ENCODE measurements at regions of chr2 and their contacts with region 1.

Region 1: DNA sequence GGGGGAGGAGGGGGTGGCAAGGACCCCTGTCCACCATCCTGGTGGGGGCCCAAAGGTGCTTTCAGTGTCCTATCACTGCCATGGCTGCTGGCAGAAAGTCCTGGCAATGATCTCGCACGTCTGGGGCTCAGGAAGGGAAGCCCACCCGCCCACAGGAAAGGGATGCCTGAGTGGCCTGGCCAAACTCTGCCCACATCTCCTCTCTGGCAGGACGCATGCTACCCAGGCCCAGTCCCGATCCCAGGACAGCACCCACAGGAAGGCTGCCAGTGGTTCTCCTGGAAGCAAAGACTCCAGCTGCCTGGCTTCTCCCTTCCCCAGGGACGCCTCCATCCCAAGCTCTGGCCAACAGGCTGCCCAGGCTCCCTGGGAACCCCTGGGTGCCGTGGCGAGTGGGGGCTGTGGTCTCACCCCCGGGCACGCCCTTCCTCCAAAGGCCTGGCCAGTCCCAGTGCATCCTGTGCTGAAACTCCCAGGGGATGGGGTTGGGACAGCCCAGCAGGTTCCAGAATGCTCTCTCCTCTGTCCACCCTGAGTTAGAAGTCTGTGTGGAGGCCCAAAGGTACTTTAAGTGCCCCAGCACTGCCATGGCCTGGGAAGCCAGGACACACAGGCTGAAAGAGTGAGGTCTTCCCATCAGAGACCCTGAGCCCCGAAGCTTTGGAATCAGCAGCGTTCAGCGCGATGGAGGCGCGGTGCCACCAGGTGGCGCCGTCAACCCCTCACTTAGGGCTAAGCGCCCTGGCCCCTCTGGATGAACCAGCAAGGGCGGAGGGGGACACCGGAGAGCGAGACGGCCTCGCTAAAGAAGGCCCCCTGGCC is 29.8 kb upstream of the TAF1B start:
- DNase-seq: peak; percentile 43 to 64 (median 58)
- H3K4me3 ChIP-seq: no peak overlapping the region
- H3K4me3 Mint-ChIP-seq: no peak overlapping the region
- H3K27ac ChIP-seq: no peak overlapping the region
- H3K27ac Mint-ChIP-seq: peak overlapping the region in 1 of 7 donors; percentile 77
- H3K4me1 ChIP-seq: peaks cover 6% of the 10 kb centered on the region
- H3K4me1 Mint-ChIP-seq: peaks cover 9 to 16% (median 12%) of the 10 kb centered on the region in 4 donors
- H3K27me3 ChIP-seq: no peaks in the 10 kb centered on the region
- H3K27me3 Mint-ChIP-seq: peaks cover 2 to 5% of the 10 kb centered on the region in 2 donors

Region 2: GRCh38 chr2:9799665-9800632 is 13.6 kb before region 1 on chr2:
- CTCF ChIA-PET with region 1: interaction called, 91 read pairs
- POLR2A ChIA-PET with region 1: interaction called, 5 read pairs
- intact Hi-C with region 1: no loop called
- DNase-seq: peak; percentile 76 to 84 (median 79)
- H3K4me3 ChIP-seq: peak overlapping the region in 1 of 2 donors; percentile 21
- H3K4me3 Mint-ChIP-seq: peak overlapping the region; percentile 71 to 96 (median 89)
- H3K27ac ChIP-seq: peak overlapping the region; percentile 75
- H3K27ac Mint-ChIP-seq: peak overlapping the region; percentile 92 to 98 (median 93)
- H3K4me1 ChIP-seq: peaks cover 36% of the 10 kb centered on the region
- H3K4me1 Mint-ChIP-seq: peaks cover 21 to 48% (median 33%) of the 10 kb centered on the region in 4 donors
- H3K27me3 ChIP-seq: no peaks in the 10 kb centered on the region
- H3K27me3 Mint-ChIP-seq: no peaks in the 10 kb centered on the region

Region 3: DNA sequence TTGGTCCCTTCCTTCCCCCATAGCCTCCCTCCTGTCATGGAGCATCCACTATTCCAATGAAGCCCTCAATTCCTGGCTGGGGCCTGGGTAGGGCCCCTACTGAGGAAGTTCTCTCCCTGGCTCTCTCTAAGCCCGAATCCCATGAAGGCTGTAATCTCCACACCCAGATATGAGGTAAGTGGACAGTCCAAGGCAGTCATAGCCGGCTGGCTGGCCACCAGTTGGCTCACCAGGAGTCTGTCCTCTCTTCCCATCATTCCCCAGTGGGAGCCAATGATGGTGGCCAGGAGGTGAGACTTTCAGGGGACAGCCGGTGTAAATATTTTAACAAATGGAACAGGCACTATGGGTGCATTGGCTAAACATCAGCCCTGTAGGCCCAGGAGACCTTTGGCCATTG is 23.0 kb after region 1 on chr2:
- CTCF ChIA-PET with region 1: interaction called, 12 read pairs
- POLR2A ChIA-PET with region 1: no interaction called
- intact Hi-C with region 1: no loop called
- DNase-seq: no peak
- H3K4me3 ChIP-seq: no peak overlapping the region
- H3K4me3 Mint-ChIP-seq: no peak overlapping the region
- H3K27ac ChIP-seq: no peak overlapping the region
- H3K27ac Mint-ChIP-seq: peak overlapping the region in 1 of 7 donors; percentile 3
- H3K4me1 ChIP-seq: no peaks in the 10 kb centered on the region
- H3K4me1 Mint-ChIP-seq: peaks cover 0 to 2% (median 0%) of the 10 kb centered on the region in 4 donors
- H3K27me3 ChIP-seq: no peaks in the 10 kb centered on the region
- H3K27me3 Mint-ChIP-seq: peaks cover 0 to 2% of the 10 kb centered on the region in 2 donors

Region 4: DNA sequence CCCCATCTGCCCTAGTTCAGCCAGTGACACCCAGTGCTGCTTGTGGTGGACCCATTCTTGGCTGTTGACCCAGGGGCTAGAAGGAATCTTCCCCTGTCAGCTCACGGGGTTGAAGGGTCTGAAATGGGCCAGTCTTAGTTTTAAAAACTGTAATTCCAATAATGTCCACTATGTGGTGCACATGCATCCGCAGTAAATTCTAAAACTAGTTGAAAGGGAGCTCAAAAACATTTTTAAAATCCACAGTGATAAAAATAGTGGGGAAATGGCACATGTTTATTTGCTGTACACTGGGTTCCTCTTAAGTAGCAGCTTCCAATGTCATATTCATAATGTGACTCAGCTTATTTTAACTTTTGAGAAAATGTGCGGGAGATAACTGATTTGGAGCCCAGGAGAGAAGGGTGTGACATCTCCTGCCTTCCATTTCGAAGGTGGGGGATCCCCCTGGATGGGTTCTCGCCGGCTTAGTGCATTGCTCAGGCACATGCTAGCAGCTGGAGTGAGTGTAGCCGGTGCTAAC is 170.8 kb after region 1 on chr2:
- CTCF ChIA-PET with region 1: interaction called, 17 read pairs
- POLR2A ChIA-PET with region 1: no interaction called
- intact Hi-C with region 1: loop called (anchors 1 kb)
- DNase-seq: peak in 4 of 5 donors; percentile 54 to 60 (median 59)
- H3K4me3 ChIP-seq: no peak overlapping the region
- H3K4me3 Mint-ChIP-seq: peak overlapping the region in 1 of 8 donors; percentile 1
- H3K27ac ChIP-seq: no peak overlapping the region
- H3K27ac Mint-ChIP-seq: peak overlapping the region in 1 of 7 donors; percentile 73
- H3K4me1 ChIP-seq: peaks cover 14% of the 10 kb centered on the region
- H3K4me1 Mint-ChIP-seq: peaks cover 10 to 14% (median 11%) of the 10 kb centered on the region in 4 donors
- H3K27me3 ChIP-seq: no peaks in the 10 kb centered on the region
- H3K27me3 Mint-ChIP-seq: peaks cover 0 to 2% of the 10 kb centered on the region in 2 donors

Region 5: GRCh38 chr2:10659898-10660568 is 846.5 kb after region 1 on chr2:
- CTCF ChIA-PET with region 1: no interaction called
- POLR2A ChIA-PET with region 1: no interaction called
- intact Hi-C with region 1: loop called (anchors 10 kb)
- DNase-seq: peak in 3 of 5 donors; percentile 13 to 19 (median 19)
- H3K4me3 ChIP-seq: no peak overlapping the region
- H3K4me3 Mint-ChIP-seq: no peak overlapping the region
- H3K27ac ChIP-seq: no peak overlapping the region
- H3K27ac Mint-ChIP-seq: no peak overlapping the region
- H3K4me1 ChIP-seq: peaks cover 9% of the 10 kb centered on the region
- H3K4me1 Mint-ChIP-seq: peaks cover 5 to 10% (median 9%) of the 10 kb centered on the region in 4 donors
- H3K27me3 ChIP-seq: no peaks in the 10 kb centered on the region
- H3K27me3 Mint-ChIP-seq: no peaks in the 10 kb centered on the region

Measured in CD4-positive, alpha-beta memory T cell (primary cell).